ENCODE measurements at regions of chr10 and their contacts with region 1.

Region 1: GRCh38 chr10:26556748-26557640 is 118.9 kb downstream of the APBB1IP start:
- DNase-seq: peak; percentile 57
- ATAC-seq: peak; percentile 45; the same call in 1 of the 2 replicates
- H3K4me3 ChIP-seq: no peak overlapping the region
- H3K27ac ChIP-seq: no peak overlapping the region
- H3K4me1 ChIP-seq: no peaks in the 10 kb centered on the region
- H3K27me3 ChIP-seq: peaks cover 49% of the 10 kb centered on the region
- CTCF ChIP-seq: peak; percentile 79

Region 2: DNA sequence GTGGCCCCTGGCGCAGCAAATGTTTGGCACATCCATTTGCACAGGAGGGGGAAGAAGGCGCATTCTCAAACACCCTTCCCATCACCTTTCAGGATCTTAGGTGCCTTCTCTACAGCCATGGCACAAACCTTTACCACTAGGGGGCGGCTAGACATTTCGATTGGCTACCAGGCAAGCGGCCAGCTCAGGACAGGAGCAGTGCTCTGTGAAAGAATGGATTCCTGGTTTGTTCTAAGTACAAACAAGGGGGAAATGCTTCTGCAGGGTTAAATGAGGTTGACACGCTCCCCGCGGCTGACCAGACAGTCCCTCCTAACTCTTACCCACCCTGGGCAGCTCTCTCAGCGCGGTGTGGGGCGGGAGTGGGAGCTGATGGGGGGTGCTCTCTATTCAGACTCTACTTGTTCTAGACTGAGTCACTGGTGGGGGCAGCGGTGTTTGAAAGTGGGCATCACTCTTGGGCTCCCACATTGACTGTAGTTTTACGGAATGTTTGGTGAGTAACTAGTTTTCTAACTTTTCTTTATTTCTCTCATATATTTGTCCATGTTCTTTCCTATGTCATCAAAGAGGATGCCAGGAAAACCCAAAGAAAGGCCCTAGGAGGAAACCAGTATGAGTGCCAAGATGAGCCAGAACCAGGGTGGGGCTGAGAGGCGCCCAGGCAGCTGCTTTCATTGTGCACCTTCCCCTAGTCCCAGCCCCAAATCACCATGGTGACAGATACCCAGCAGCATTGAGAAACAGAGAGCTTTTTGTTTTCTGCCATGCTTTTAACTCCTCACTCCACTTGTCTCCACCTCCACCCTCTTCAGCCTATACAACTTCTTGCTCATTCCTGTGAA is 1443.6 kb before region 1 on chr10:
- CTCF ChIA-PET with region 1: no interaction called
- POLR2A ChIA-PET with region 1: no interaction called
- intact Hi-C with region 1: loop called (anchors 5 kb)
- DNase-seq: peak; percentile 87
- ATAC-seq: peak; percentile 89
- H3K4me3 ChIP-seq: peak overlapping the region; percentile 42
- H3K27ac ChIP-seq: peak overlapping the region; percentile 94
- H3K4me1 ChIP-seq: peaks cover 17% of the 10 kb centered on the region
- H3K27me3 ChIP-seq: no peaks in the 10 kb centered on the region
- CTCF ChIP-seq: peak; percentile 87

Region 3: DNA sequence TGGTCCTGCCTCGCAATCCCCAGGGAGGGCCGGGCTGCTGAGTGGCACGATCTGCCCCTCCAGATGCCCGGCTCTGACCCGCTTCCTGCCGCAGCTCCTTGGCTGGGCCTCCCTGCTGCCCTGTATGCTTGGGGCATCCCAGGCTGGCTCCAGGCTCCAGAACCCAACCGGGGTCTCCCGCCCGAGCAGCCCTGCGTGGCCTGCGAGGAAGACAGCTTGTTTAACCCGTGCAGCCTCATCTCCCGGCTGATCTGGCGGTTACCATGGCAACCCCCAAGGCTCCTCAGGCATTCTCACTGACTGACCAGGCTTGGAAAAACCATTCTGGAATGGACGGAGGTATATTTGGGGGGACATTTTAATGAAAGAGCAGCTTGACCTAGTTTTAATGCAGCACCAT is 855.3 kb before region 1 on chr10:
- CTCF ChIA-PET with region 1: no interaction called
- POLR2A ChIA-PET with region 1: no interaction called
- intact Hi-C with region 1: loop called (anchors 10 kb)
- DNase-seq: no peak
- ATAC-seq: no peak
- H3K4me3 ChIP-seq: no peak overlapping the region
- H3K27ac ChIP-seq: no peak overlapping the region
- H3K4me1 ChIP-seq: no peaks in the 10 kb centered on the region
- H3K27me3 ChIP-seq: no peaks in the 10 kb centered on the region
- CTCF ChIP-seq: no peak

Region 4: DNA sequence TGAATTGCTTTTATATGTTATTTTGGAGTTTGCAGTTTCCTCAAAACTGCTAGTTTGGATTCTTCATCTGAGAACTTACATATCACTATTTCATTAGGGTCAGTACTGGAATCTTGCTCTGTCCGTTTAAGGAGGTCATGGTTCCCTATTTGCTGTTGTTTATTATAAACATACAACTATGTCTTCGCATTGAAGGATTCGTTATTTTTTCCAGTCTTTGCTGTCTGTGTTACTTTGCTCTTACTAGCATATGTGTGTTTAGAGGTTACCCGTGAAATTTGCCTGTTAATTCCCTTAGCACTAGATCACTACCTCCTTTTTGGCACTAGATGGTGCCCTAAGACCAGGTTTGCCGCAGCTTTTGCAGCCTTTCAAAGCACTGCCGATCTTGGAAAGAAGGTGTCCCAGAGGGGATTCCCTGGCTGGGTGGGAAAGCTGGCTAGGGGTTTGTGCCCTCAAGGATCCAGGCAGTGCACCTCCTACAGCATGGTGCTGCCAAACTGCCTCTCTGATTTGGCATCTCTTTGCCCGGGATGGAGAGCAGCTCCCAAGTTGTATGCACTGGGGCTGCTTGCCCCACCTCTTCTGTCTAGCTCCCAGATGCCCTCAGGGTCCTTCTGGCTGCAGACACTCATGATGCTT is 221.9 kb before region 1 on chr10:
- CTCF ChIA-PET with region 1: no interaction called
- POLR2A ChIA-PET with region 1: no interaction called
- intact Hi-C with region 1: loop called (anchors 1 kb)
- DNase-seq: peak; percentile 62
- ATAC-seq: peak; percentile 51
- H3K4me3 ChIP-seq: 0 out of 2 replicates have a peak overlapping the region, but pooled peaks have one; percentile 28
- H3K27ac ChIP-seq: no peak overlapping the region
- H3K4me1 ChIP-seq: no peaks in the 10 kb centered on the region
- H3K27me3 ChIP-seq: peaks cover 16% of the 10 kb centered on the region
- CTCF ChIP-seq: peak; percentile 83